HepG2 (cell line): ENCODE measurements at regions of chr1 and their contacts with region 1.

Region 1: GRCh38 chr1:9629445-9630201 is 21.9 kb upstream of the PIK3CD start:
- DNase-seq: no peak
- ATAC-seq: peak; percentile 12
- H3K4me3 ChIP-seq: peak overlapping the region in 2 of 3 experiments; percentile 2 to 40; a peak in 1 of 6 replicates
- H3K27ac ChIP-seq: no peak overlapping the region
- H3K4me1 ChIP-seq: peaks cover 29% of the 10 kb centered on the region
- H3K27me3 ChIP-seq: peaks cover 0 to 23% of the 10 kb centered on the region in 2 experiments; a peak in 4 of 5 replicates
- CTCF ChIP-seq: no peak
- EP300 ChIP-seq: no peak
- POLR2A ChIP-seq: no peak
- RAD21 ChIP-seq: no peak

Region 2: GRCh38 chr1:9555942-9556341 is 73.7 kb before region 1 on chr1:
- CTCF ChIA-PET with region 1: no interaction called
- POLR2A ChIA-PET with region 1: no interaction called
- in situ Hi-C with region 1: no loop called
- intact Hi-C with region 1: no loop called
- DNase-seq: no peak
- ATAC-seq: no peak
- H3K4me3 ChIP-seq: no peak overlapping the region
- H3K27ac ChIP-seq: peak overlapping the region; percentile 30
- H3K4me1 ChIP-seq: peaks cover 97% of the 10 kb centered on the region
- H3K27me3 ChIP-seq: no peaks in the 10 kb centered on the region
- CTCF ChIP-seq: no peak
- EP300 ChIP-seq: no peak
- POLR2A ChIP-seq: no peak
- RAD21 ChIP-seq: no peak

Region 3: DNA sequence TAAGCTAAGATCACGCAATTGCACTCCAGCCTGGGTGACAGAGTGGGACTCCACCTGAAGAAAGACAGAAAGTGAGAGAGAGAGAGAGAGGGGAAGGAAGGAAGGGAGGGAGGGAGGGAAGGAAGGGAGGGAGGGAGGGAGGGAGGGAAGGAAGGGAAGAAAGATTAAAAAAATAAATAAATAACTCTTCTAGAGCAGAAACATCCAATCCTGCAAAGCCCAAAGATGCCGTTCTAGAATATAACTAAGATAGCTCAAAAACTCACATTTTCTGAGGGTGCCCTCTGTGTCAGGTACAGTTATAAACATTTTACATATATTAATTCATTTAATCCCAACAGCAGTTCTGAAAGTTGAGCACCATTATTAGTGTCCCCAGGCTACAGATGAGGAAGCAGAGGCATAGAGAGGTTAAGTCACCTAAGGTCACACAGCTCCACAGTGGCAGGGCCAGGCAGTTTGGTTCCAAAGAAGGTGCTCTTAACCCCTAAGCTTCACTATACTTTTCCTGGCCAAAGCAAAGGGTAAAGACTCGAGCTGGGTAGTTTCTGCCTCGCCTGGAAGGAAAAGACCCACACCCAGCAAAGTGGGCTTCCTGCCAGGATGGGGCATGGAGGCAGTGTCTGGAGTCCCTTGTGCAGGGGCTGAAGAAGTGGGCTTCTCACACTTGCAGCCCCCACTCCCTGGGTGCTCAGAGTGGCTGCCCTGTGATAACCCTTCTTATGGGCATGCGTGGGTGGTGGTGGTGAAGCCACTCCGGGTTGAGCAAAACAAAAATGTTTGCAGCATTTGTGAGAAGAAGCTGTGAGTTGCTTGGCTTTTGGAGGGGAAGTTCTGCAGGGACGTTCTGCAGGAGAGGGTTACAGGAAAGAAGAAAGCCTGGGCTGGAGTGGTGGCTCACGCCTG is 14.0 kb after region 1 on chr1:
- CTCF ChIA-PET with region 1: no interaction called
- POLR2A ChIA-PET with region 1: no interaction called
- in situ Hi-C with region 1: no loop called
- intact Hi-C with region 1: no loop called
- DNase-seq: no peak
- ATAC-seq: no peak
- H3K4me3 ChIP-seq: no peak overlapping the region
- H3K27ac ChIP-seq: no peak overlapping the region
- H3K4me1 ChIP-seq: no peaks in the 10 kb centered on the region
- H3K27me3 ChIP-seq: peaks cover 0 to 32% of the 10 kb centered on the region in 2 experiments; a peak in 4 of 5 replicates
- CTCF ChIP-seq: no peak
- EP300 ChIP-seq: no peak
- POLR2A ChIP-seq: no peak
- RAD21 ChIP-seq: no peak

Region 4: DNA sequence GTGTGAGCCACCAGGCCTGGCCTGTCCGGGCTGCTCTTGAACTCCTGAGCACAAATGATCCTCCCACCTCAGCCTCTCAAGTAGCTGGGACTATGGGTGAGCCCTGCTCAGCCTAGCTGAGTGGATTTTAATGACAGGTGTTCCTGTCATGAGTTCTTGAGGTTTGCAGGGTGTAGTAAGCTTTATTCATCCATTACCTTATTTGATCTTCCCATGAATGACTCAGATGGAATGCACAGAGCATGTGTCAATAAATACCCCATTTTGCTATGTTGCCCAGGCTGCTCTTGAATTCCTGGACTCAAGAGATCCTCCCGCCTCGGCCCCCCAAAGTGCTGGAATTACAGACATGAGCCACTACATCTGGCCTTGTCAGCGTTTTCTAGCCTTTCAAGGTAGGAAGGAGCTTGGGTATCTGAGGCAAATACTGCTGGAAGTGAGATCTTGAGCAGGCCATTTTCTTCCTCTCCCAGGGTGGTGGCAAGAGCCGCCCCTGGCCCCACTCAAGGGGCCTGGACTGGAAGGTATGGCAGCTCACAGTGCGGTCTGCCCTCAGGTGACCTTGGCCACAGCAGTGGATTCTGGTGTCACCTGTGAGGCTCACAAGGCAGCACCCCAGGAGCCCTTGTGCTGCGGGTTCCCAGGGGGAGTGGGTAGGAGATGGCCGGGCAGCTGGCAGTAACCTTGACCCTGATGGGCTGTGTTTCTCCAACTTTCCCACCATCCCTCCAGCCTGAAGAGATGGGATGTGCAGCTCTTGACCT is 41.9 kb after region 1 on chr1:
- CTCF ChIA-PET with region 1: no interaction called
- POLR2A ChIA-PET with region 1: no interaction called
- in situ Hi-C with region 1: no loop called
- intact Hi-C with region 1: no loop called
- DNase-seq: peak; percentile 74
- ATAC-seq: peak; percentile 70
- H3K4me3 ChIP-seq: peak overlapping the region in 1 of 3 experiments; percentile 22; a peak in 1 of 6 replicates
- H3K27ac ChIP-seq: no peak overlapping the region
- H3K4me1 ChIP-seq: peaks cover 22% of the 10 kb centered on the region
- H3K27me3 ChIP-seq: peaks cover 0 to 12% of the 10 kb centered on the region in 2 experiments; a peak in 2 of 5 replicates
- CTCF ChIP-seq: no peak
- EP300 ChIP-seq: no peak
- POLR2A ChIP-seq: no peak
- RAD21 ChIP-seq: no peak

Region 5: GRCh38 chr1:9717193-9718005 is 87.8 kb after region 1 on chr1:
- CTCF ChIA-PET with region 1: interaction called, 12 read pairs
- POLR2A ChIA-PET with region 1: interaction called, 5 read pairs
- in situ Hi-C with region 1: no loop called
- intact Hi-C with region 1: loop called (anchors 1 kb)
- DNase-seq: peak; percentile 93
- ATAC-seq: peak; percentile 89
- H3K4me3 ChIP-seq: peak overlapping the region; percentile 56 to 83 (median 65)
- H3K27ac ChIP-seq: peak overlapping the region; percentile 97
- H3K4me1 ChIP-seq: peaks cover 42% of the 10 kb centered on the region
- H3K27me3 ChIP-seq: no peaks in the 10 kb centered on the region
- CTCF ChIP-seq: peak; percentile 68
- EP300 ChIP-seq: peak in 1 of 2 experiments; percentile 52; a peak in 2 of 4 replicates
- POLR2A ChIP-seq: peak in 1 of 2 experiments; percentile 74; a peak in 2 of 4 replicates
- RAD21 ChIP-seq: peak; percentile 65

Region 6: GRCh38 chr1:9724706-9725476 is 95.3 kb after region 1 on chr1:
- CTCF ChIA-PET with region 1: interaction called, 22 read pairs
- POLR2A ChIA-PET with region 1: no interaction called
- in situ Hi-C with region 1: no loop called
- intact Hi-C with region 1: no loop called
- DNase-seq: peak; percentile 58
- ATAC-seq: peak; percentile 89
- H3K4me3 ChIP-seq: no peak overlapping the region
- H3K27ac ChIP-seq: no peak overlapping the region
- H3K4me1 ChIP-seq: no peaks in the 10 kb centered on the region
- H3K27me3 ChIP-seq: no peaks in the 10 kb centered on the region
- CTCF ChIP-seq: peak; percentile 93
- EP300 ChIP-seq: no peak
- POLR2A ChIP-seq: no peak
- RAD21 ChIP-seq: peak; percentile 79

Region 7: DNA sequence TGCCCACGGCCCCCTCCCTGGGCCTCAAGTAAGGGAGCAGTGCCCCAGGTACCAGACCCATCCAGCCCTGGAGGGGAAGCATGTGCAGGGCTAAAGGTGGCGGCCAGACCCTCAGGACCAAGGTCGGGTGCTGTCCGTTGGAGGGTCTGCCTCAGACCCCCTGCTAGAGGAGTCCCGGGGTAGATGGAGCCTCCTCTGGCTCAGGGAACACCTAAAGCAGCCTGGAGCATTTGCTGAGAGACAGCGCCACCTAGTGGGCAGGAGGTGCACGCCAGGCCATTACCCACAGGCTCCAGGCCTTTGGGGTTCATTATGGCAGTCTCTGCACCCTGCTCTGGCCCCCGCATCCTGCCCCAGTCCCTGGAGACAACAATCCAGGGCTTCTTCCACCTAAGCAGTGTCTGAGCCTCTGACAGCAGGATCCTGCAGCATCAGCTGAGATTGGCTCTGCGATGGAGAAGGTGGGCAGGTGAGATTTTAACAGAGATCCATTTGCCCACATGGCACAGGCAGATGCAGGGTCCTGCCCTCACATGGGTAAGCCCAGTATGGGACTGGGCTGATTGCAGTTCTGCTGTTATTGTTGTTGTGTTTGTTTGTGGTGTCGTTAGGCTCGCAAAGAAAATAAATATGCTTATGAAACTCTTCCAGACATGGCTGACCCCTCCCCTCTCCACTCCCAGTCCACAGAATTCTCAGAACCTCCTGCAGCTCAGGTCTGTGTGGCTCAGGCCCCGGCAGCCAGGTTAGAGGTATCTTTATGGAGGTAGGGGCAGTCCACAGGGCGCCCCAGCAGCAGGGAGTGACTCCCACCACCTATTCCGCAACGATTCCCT is 238.0 kb after region 1 on chr1:
- CTCF ChIA-PET with region 1: interaction called, 8 read pairs
- POLR2A ChIA-PET with region 1: no interaction called
- in situ Hi-C with region 1: no loop called
- intact Hi-C with region 1: loop called (anchors 5 kb)
- DNase-seq: peak; percentile 46
- ATAC-seq: peak; percentile 85
- H3K4me3 ChIP-seq: no peak overlapping the region
- H3K27ac ChIP-seq: no peak overlapping the region
- H3K4me1 ChIP-seq: peaks cover 28% of the 10 kb centered on the region
- H3K27me3 ChIP-seq: no peaks in the 10 kb centered on the region
- CTCF ChIP-seq: peak; percentile 98
- EP300 ChIP-seq: no peak
- POLR2A ChIP-seq: no peak
- RAD21 ChIP-seq: peak; percentile 94

Region 8: DNA sequence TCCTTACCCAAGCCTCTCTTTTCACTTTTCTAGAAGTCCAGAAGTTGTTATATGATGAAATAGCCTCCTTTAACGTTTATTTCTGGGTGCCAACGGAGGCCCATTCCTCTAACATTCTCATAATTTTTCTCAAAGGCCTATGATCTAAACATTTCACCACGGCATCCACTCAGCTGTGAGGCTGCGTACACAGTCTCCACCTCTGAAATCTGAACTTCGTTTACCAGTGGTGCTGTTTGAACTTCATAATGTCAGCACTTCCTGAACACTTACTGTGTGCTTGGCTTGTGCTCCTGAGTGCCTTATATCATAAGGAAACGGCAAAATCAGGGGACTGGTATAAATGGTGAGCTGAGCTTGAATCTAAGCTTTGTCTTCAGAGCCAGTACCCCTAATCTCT is 355.4 kb after region 1 on chr1:
- CTCF ChIA-PET with region 1: no interaction called
- POLR2A ChIA-PET with region 1: no interaction called
- in situ Hi-C with region 1: no loop called
- intact Hi-C with region 1: no loop called
- DNase-seq: no peak
- ATAC-seq: no peak
- H3K4me3 ChIP-seq: no peak overlapping the region
- H3K27ac ChIP-seq: no peak overlapping the region
- H3K4me1 ChIP-seq: peaks cover 20% of the 10 kb centered on the region
- H3K27me3 ChIP-seq: no peaks in the 10 kb centered on the region
- CTCF ChIP-seq: no peak
- EP300 ChIP-seq: no peak
- POLR2A ChIP-seq: no peak
- RAD21 ChIP-seq: no peak